ENCODE measurements at regions of chr4 and their contacts with region 1.

Region 1: DNA sequence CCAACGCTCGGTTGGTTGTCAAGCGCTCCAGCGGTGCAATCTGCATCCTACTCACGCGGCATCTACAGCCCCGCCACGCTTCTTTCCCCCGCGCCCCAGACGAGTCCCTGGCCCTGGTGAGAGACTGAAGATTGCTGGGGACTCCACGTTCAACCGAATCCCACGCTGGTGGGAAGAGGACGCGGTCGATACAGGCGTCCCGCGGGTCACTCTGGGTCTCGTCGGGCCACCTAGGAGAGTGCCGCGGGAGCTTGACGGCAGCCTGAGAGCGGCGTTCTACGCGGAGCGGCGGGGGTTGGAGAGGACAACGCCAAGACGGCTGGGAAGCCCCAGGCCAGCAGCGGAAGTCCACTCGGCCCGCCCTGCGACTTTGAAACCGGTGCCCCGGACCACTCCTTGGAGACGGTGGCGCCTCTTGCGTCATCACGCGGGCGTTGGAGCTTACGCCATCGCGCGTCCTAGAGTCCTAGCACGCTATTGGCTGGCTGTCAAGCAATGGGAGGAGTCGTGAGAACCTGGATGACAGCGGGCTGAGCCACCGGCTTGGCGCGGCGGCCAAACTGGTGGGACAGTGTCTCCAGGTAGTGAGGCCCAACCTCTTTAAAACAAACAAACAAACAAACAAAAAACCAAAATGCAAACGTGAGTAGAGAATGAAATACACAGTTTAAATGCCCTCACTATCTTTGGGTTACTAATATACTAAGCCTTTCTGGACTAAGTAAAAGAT is at the start of gene SCLT1:
- DNase-seq: peak; percentile 96 to 98
- ATAC-seq: peak; percentile 89 to 97 (median 91)
- H3K4me3 ChIP-seq: peak within 1 kb of the TSS; percentile 98
- H3K4me3 Mint-ChIP-seq: no peak within 1 kb of the TSS
- H3K27ac ChIP-seq: peak within 1 kb of the TSS; percentile 100
- H3K27ac Mint-ChIP-seq: no peak within 1 kb of the TSS
- H3K4me1 ChIP-seq: peaks cover 6% of the 10 kb centered on the region
- H3K4me1 Mint-ChIP-seq: peaks cover 27 to 44% of the 10 kb centered on the region in 2 donors
- H3K27me3 ChIP-seq: no peaks in the 10 kb centered on the region
- H3K27me3 Mint-ChIP-seq: no peaks in the 10 kb centered on the region
- CTCF ChIP-seq: no peak
- total RNA-seq, gene SCLT1: 54.0 to 59.9 (median 55.4) TPM

Region 2: GRCh38 chr4:127965062-127965802 is 1128.1 kb before region 1 on chr4 and contains the starts of genes ABHD18 and MFSD8:
- intact Hi-C with region 1: loop called (anchors 5 kb)
- DNase-seq: peak; percentile 95 to 100
- ATAC-seq: peak; percentile 91 to 98 (median 93)
- H3K4me3 ChIP-seq: peak within 1 kb of the TSS; percentile 85
- H3K4me3 Mint-ChIP-seq: peak within 1 kb of the TSS; percentile 97
- H3K27ac ChIP-seq: peak within 1 kb of the TSS; percentile 87
- H3K27ac Mint-ChIP-seq: peak within 1 kb of the TSS; percentile 95 to 98
- H3K4me1 ChIP-seq: peaks cover 16% of the 10 kb centered on the region
- H3K4me1 Mint-ChIP-seq: peaks cover 30 to 32% of the 10 kb centered on the region in 2 donors
- H3K27me3 ChIP-seq: no peaks in the 10 kb centered on the region
- H3K27me3 Mint-ChIP-seq: no peaks in the 10 kb centered on the region
- CTCF ChIP-seq: peak; percentile 25
- total RNA-seq, gene ABHD18: 16.0 to 21.9 (median 17.6) TPM
- total RNA-seq, gene MFSD8: 25.9 to 34.0 (median 25.9) TPM

Region 3: DNA sequence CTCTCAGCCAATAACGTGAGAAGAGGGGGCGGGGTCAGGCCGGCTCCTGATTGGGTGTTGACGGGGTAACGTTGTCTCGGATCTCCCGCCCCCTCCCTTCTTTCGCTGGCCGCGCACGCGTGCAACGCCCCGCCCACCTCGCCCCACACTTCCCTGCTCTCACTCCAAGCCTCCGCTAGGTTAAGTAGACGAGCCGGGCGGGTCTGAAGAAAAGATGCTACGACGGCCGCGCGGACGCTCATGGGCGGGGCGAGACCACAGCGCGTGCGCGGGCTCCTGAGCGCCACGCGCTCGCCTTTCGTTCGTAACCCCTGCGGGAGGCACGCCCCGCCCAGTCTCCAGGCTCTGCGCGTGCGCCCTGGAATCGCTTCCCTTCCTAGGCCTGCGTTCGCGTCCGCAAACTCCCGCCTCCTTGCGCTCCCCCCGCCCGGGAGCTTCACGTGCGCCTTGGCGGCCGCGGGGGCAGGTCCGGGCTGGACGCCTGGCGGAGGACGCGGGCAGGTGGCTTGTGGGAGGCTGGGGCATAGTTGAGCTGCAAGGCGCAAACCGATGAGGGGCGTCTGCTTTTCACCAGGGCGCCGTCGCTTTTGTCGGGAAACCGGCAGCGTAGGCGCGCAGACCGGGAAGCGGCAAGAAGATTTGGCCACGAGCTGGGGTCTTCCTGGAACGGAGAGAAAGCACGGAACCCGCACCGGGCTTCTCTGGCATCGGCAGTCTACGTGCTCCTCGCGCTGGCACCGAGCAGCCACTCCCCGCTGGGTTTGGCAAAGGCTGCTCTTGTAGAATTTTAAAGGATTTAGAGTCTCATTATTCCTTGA is 805.3 kb before region 1 on chr4:
- intact Hi-C with region 1: loop called (anchors 2 kb)
- DNase-seq: peak; percentile 97 to 100
- ATAC-seq: peak; percentile 84 to 94 (median 85)
- H3K4me3 ChIP-seq: peak overlapping the region; percentile 87
- H3K4me3 Mint-ChIP-seq: peak overlapping the region; percentile 93
- H3K27ac ChIP-seq: peak overlapping the region; percentile 97
- H3K27ac Mint-ChIP-seq: peak overlapping the region; percentile 85 to 90
- H3K4me1 ChIP-seq: peaks cover 16% of the 10 kb centered on the region
- H3K4me1 Mint-ChIP-seq: peaks cover 34 to 35% of the 10 kb centered on the region in 2 donors
- H3K27me3 ChIP-seq: no peaks in the 10 kb centered on the region
- H3K27me3 Mint-ChIP-seq: peaks cover 0 to 2% of the 10 kb centered on the region in 2 donors
- CTCF ChIP-seq: no peak

Region 4: GRCh38 chr4:128768373-128768996 is 324.9 kb before region 1 on chr4:
- intact Hi-C with region 1: no loop called
- DNase-seq: no peak
- ATAC-seq: no peak
- H3K4me3 ChIP-seq: no peak overlapping the region
- H3K4me3 Mint-ChIP-seq: no peak overlapping the region
- H3K27ac ChIP-seq: no peak overlapping the region
- H3K27ac Mint-ChIP-seq: no peak overlapping the region
- H3K4me1 ChIP-seq: no peaks in the 10 kb centered on the region
- H3K4me1 Mint-ChIP-seq: no peaks in the 10 kb centered on the region
- H3K27me3 ChIP-seq: peaks cover 2% of the 10 kb centered on the region
- H3K27me3 Mint-ChIP-seq: peaks cover 0 to 6% of the 10 kb centered on the region in 2 donors
- CTCF ChIP-seq: no peak

Region 5: DNA sequence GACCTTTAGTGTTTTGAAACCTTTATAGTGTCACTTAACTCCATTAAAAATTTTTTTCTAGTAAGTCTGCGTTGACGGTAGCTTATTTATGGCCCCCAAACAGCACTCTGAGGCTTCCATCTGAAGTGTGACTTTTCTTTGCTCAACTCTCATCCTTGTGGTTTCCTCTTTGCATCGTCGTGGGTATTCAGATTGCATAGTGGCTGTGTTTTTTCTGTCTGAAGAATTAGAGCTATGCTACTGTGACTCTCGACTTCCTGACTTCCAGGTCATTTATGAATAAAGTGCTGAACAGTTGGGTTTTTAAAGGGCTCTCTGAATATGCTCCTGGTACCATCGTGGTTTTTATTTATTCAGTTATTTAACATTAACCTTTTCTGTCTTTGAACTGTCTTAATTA is 238.9 kb before region 1 on chr4:
- intact Hi-C with region 1: loop called (anchors 2 kb)
- DNase-seq: peak in 1 of 2 donors; percentile 75
- ATAC-seq: peak; percentile 92 to 98 (median 93)
- H3K4me3 ChIP-seq: no peak overlapping the region
- H3K4me3 Mint-ChIP-seq: peak overlapping the region; percentile 85
- H3K27ac ChIP-seq: peak overlapping the region; percentile 68
- H3K27ac Mint-ChIP-seq: peak overlapping the region; percentile 95 to 98
- H3K4me1 ChIP-seq: peaks cover 20% of the 10 kb centered on the region
- H3K4me1 Mint-ChIP-seq: peaks cover 49 to 57% of the 10 kb centered on the region in 2 donors
- H3K27me3 ChIP-seq: no peaks in the 10 kb centered on the region
- H3K27me3 Mint-ChIP-seq: no peaks in the 10 kb centered on the region
- CTCF ChIP-seq: no peak

Region 6: GRCh38 chr4:128863312-128864075 is 229.9 kb before region 1 on chr4:
- intact Hi-C with region 1: loop called (anchors 2 kb)
- DNase-seq: peak; percentile 63 to 86
- ATAC-seq: peak in 2 of 3 donors; percentile 27 to 46
- H3K4me3 ChIP-seq: no peak overlapping the region
- H3K4me3 Mint-ChIP-seq: peak overlapping the region; percentile 58
- H3K27ac ChIP-seq: peak overlapping the region; percentile 44
- H3K27ac Mint-ChIP-seq: peak overlapping the region; percentile 85 to 89
- H3K4me1 ChIP-seq: peaks cover 27% of the 10 kb centered on the region
- H3K4me1 Mint-ChIP-seq: peaks cover 56 to 58% of the 10 kb centered on the region in 2 donors
- H3K27me3 ChIP-seq: no peaks in the 10 kb centered on the region
- H3K27me3 Mint-ChIP-seq: no peaks in the 10 kb centered on the region
- CTCF ChIP-seq: peak; percentile 96

Region 7: GRCh38 chr4:128916832-128917231 is 176.5 kb before region 1 on chr4:
- intact Hi-C with region 1: loop called (anchors 2 kb)
- DNase-seq: peak; percentile 38 to 57
- ATAC-seq: peak; percentile 83 to 92 (median 89)
- H3K4me3 ChIP-seq: no peak overlapping the region
- H3K4me3 Mint-ChIP-seq: peak overlapping the region; percentile 79
- H3K27ac ChIP-seq: peak overlapping the region; percentile 83
- H3K27ac Mint-ChIP-seq: peak overlapping the region; percentile 73 to 90
- H3K4me1 ChIP-seq: peaks cover 22% of the 10 kb centered on the region
- H3K4me1 Mint-ChIP-seq: peaks cover 68 to 70% of the 10 kb centered on the region in 2 donors
- H3K27me3 ChIP-seq: no peaks in the 10 kb centered on the region
- H3K27me3 Mint-ChIP-seq: no peaks in the 10 kb centered on the region
- CTCF ChIP-seq: no peak